Activated CD4-positive, alpha-beta memory T cell treated with anti-CD3 and anti-CD28 coated beads, Interleukin-2, amount 10 ng/mL, durations not matched to agents 7 days and 5 days (primary cell): ENCODE measurements at regions of chr2 and their contacts with region 1.

Region 1: DNA sequence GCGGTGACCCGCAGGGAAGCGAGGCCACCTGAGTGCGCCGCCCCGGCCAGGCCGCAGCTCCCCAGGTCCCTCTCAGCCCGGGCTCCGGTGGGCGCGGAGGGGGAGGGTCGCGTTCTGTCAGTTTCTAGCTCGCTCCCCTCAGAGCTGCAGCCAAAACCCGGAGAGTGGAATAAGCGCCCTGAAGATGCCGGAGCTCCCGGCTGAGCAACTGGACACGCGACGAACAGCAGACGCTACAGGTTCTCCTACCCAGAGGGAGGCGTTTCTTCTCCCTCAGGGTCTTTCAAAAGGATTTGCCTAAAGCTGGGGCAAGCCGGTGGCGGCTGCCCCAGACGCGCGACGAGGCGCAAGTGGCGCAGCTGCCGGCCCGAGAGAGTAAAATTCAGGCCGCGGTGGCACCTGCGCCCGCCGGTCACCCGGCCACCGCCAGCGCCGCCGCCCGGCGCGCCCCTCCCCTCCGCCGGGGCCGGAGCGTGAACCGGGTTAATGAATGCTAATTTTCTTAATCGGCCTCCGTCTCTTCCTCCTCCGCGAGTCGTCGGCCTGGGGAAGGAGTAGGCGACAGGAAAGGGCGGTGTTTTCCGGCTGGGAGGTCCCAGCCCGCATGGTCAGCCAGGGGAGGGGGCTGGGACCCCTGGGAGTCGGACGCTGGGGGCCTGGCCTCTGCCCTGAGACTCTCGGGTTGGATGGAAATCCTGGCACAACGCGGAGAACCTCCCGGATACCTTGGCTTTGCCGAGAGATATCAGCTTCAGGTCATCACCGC is 845 bp upstream of the CDC42EP3 start:
- DNase-seq: peak; percentile 74
- H3K4me3 Mint-ChIP-seq: peak overlapping the region; percentile 81
- H3K27ac Mint-ChIP-seq: peak overlapping the region; percentile 81
- H3K4me1 Mint-ChIP-seq: peaks cover 34% of the 10 kb centered on the region
- H3K27me3 Mint-ChIP-seq: no peaks in the 10 kb centered on the region

Region 2: GRCh38 chr2:37585982-37586621 is 86.2 kb before region 1 on chr2:
- CTCF ChIA-PET with region 1: interaction called, 3 read pairs
- POLR2A ChIA-PET with region 1: interaction called, 15 read pairs
- DNase-seq: peak; percentile 79
- H3K4me3 Mint-ChIP-seq: peak overlapping the region; percentile 15
- H3K27ac Mint-ChIP-seq: peak overlapping the region; percentile 99
- H3K4me1 Mint-ChIP-seq: peaks cover 90% of the 10 kb centered on the region
- H3K27me3 Mint-ChIP-seq: no peaks in the 10 kb centered on the region

Region 3: GRCh38 chr2:37615804-37616676 is 56.2 kb before region 1 on chr2:
- CTCF ChIA-PET with region 1: interaction called, 3 read pairs
- POLR2A ChIA-PET with region 1: interaction called, 16 read pairs
- DNase-seq: peak; percentile 88
- H3K4me3 Mint-ChIP-seq: no peak overlapping the region
- H3K27ac Mint-ChIP-seq: peak overlapping the region; percentile 92
- H3K4me1 Mint-ChIP-seq: peaks cover 50% of the 10 kb centered on the region
- H3K27me3 Mint-ChIP-seq: no peaks in the 10 kb centered on the region

Region 4: GRCh38 chr2:37635504-37636380 is 36.5 kb before region 1 on chr2:
- CTCF ChIA-PET with region 1: no interaction called
- POLR2A ChIA-PET with region 1: no interaction called
- DNase-seq: peak; percentile 77
- H3K4me3 Mint-ChIP-seq: no peak overlapping the region
- H3K27ac Mint-ChIP-seq: peak overlapping the region; percentile 71
- H3K4me1 Mint-ChIP-seq: peaks cover 55% of the 10 kb centered on the region
- H3K27me3 Mint-ChIP-seq: no peaks in the 10 kb centered on the region

Region 5: DNA sequence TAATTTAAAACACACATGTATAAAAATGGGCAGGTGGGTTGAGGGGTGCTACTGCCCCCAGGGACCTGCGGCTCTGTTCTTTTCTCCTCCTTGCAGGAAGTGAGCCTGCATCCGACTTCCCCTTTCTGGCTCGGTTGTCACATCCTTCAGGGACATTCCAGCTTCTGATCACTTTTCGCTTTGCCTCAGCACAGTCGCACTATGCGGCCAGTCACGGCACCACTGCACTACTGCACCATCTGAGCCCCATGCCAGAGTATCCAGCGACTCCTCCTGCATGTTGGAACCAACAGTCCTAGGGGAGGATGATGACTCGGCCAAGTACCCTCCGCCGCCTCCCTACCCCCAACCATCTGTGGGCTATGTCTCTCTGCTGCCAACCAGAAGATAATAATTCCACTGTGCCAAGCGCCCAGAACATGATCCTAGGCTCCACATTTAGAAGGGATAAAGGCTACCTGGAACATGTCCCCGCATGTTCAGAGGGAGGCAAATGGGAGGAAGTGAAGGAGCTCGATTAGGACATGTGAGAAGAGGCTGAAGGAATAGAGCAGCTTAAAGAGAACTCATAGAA is 18.4 kb before region 1 on chr2:
- CTCF ChIA-PET with region 1: interaction called, 7 read pairs
- POLR2A ChIA-PET with region 1: interaction called, 29 read pairs
- DNase-seq: no peak
- H3K4me3 Mint-ChIP-seq: peak overlapping the region; percentile 49
- H3K27ac Mint-ChIP-seq: peak overlapping the region; percentile 84
- H3K4me1 Mint-ChIP-seq: peaks cover 94% of the 10 kb centered on the region
- H3K27me3 Mint-ChIP-seq: no peaks in the 10 kb centered on the region

Region 6: GRCh38 chr2:37711308-37711731 is 39.0 kb after region 1 on chr2:
- CTCF ChIA-PET with region 1: no interaction called
- POLR2A ChIA-PET with region 1: interaction called, 21 read pairs
- DNase-seq: peak; percentile 78
- H3K4me3 Mint-ChIP-seq: peak overlapping the region; percentile 9
- H3K27ac Mint-ChIP-seq: peak overlapping the region; percentile 79
- H3K4me1 Mint-ChIP-seq: peaks cover 64% of the 10 kb centered on the region
- H3K27me3 Mint-ChIP-seq: peaks cover 3% of the 10 kb centered on the region

Region 7: GRCh38 chr2:37767956-37768925 is 96.0 kb after region 1 on chr2:
- CTCF ChIA-PET with region 1: no interaction called
- POLR2A ChIA-PET with region 1: no interaction called
- DNase-seq: no peak
- H3K4me3 Mint-ChIP-seq: no peak overlapping the region
- H3K27ac Mint-ChIP-seq: no peak overlapping the region
- H3K4me1 Mint-ChIP-seq: peaks cover 4% of the 10 kb centered on the region
- H3K27me3 Mint-ChIP-seq: no peaks in the 10 kb centered on the region